ENCODE measurements at regions of chr1 and their contacts with region 1.

Region 1: GRCh38 chr1:184025242-184025675 is 12.3 kb downstream of the COLGALT2 start:
- DNase-seq: peak; percentile 80
- ATAC-seq: peak; percentile 92
- H3K4me3 ChIP-seq: no peak overlapping the region
- H3K27ac ChIP-seq: no peak overlapping the region
- H3K4me1 ChIP-seq: peaks cover 22% of the 10 kb centered on the region
- H3K27me3 ChIP-seq: no peaks in the 10 kb centered on the region; a peak in 2 of 5 replicates
- CTCF ChIP-seq: no peak
- EP300 ChIP-seq: no peak
- POLR2A ChIP-seq: no peak
- RAD21 ChIP-seq: no peak

Region 2: GRCh38 chr1:183942933-183943693 is 82.1 kb before region 1 on chr1:
- CTCF ChIA-PET with region 1: no interaction called
- POLR2A ChIA-PET with region 1: no interaction called
- in situ Hi-C with region 1: no loop called
- intact Hi-C with region 1: loop called (anchors 10 kb)
- DNase-seq: no peak
- ATAC-seq: no peak
- H3K4me3 ChIP-seq: no peak overlapping the region
- H3K27ac ChIP-seq: no peak overlapping the region
- H3K4me1 ChIP-seq: peaks cover 15% of the 10 kb centered on the region
- H3K27me3 ChIP-seq: no peaks in the 10 kb centered on the region
- CTCF ChIP-seq: no peak
- EP300 ChIP-seq: no peak
- POLR2A ChIP-seq: no peak
- RAD21 ChIP-seq: no peak

Region 3: GRCh38 chr1:184082541-184083415 is 57.5 kb after region 1 on chr1:
- CTCF ChIA-PET with region 1: no interaction called
- POLR2A ChIA-PET with region 1: no interaction called
- in situ Hi-C with region 1: no loop called
- intact Hi-C with region 1: no loop called
- DNase-seq: no peak
- ATAC-seq: no peak
- H3K4me3 ChIP-seq: no peak overlapping the region
- H3K27ac ChIP-seq: no peak overlapping the region
- H3K4me1 ChIP-seq: no peaks in the 10 kb centered on the region
- H3K27me3 ChIP-seq: no peaks in the 10 kb centered on the region
- CTCF ChIP-seq: no peak
- EP300 ChIP-seq: no peak
- POLR2A ChIP-seq: no peak
- RAD21 ChIP-seq: no peak

Region 4: GRCh38 chr1:184260382-184260781 is 235.1 kb after region 1 on chr1:
- CTCF ChIA-PET with region 1: no interaction called
- POLR2A ChIA-PET with region 1: no interaction called
- in situ Hi-C with region 1: no loop called
- intact Hi-C with region 1: no loop called
- DNase-seq: no peak
- ATAC-seq: no peak
- H3K4me3 ChIP-seq: no peak overlapping the region
- H3K27ac ChIP-seq: no peak overlapping the region
- H3K4me1 ChIP-seq: no peaks in the 10 kb centered on the region
- H3K27me3 ChIP-seq: no peaks in the 10 kb centered on the region; a peak in 1 of 5 replicates
- CTCF ChIP-seq: no peak
- EP300 ChIP-seq: no peak
- POLR2A ChIP-seq: no peak
- RAD21 ChIP-seq: no peak